ENCODE measurements at regions of chr19 and their contacts with region 1.

Region 1: DNA sequence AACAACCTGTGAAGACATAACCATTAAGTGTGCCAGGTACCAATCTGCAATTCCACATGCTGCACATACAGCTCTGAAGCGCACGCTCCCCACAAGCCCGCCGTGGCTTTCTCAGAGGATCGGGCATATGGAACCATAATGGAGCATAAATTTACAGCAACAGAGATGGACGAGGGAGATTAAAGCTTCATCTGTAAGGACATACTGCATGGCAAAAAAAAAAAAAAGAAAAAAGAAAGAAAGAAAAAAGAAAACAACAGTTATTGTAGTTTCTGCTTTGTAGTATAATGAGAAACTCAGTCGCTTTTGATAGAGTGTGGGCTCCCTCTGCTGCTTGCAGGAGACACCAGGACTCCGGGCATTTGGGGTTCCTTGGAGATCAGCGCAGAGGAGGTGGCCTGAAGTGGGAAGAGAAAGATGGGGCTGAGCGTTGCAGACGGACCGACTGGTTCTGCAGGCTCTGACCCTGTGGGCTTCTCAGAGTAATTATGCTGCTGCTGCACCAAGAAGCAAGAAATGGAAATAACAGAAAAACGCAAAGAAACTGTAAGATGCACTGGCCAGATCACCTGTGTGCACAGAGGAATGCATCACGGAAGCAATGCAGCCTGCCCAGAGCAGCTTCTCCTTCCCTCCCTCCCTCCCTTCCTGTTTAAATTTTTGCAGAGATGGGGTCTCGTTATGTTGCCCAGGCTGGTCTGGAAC is 10.8 kb upstream of the PDCD5 start:
- DNase-seq: peak; percentile 70 to 85
- ATAC-seq: peak; percentile 98
- H3K4me3 ChIP-seq: no peak overlapping the region
- H3K27ac ChIP-seq: no peak overlapping the region
- H3K4me1 ChIP-seq: peaks cover 4% of the 10 kb centered on the region; the same call in 2 of the 3 replicates
- CTCF ChIP-seq: peak; percentile 99
- EP300 ChIP-seq: no peak
- POLR2A ChIP-seq: no peak
- RAD21 ChIP-seq: peak; percentile 99 to 100

Region 2: DNA sequence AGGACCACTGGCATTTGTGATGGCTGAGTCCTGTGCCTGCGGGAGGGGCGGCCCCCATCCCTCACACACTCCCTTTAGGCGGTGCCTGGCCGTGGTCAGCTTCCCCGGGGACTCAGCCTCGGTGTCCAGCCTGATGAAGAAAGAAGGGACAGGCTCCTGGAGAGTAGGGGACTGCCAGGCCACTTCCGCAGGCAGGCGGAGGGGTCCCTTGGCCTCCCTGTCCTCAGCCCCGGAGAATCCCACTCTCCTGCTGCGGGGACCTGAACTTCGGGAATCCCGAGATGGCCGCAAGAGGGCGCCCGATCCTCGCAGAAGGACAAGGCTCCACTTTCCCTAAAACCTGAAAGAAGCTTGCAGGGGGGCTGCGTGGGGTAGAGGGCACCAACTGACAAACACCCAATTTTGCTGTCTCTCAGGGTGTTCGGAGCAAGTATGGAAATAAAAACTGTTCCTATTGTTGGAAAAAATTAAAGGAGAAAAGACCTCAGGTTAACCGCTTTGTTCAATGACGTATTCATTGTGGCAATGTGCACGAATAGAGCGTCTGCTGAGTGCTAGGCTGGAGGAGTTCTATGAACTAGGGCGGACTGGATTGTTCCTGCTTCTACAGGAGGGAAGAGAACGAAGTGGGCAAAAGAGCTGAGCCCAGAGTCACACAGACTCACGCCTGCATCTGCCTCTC is 1900.8 kb before region 1 on chr19:
- CTCF ChIA-PET with region 1: interaction called, 19 read pairs
- POLR2A ChIA-PET with region 1: no interaction called
- DNase-seq: peak; percentile 61 to 66
- ATAC-seq: peak; percentile 61 to 88
- H3K4me3 ChIP-seq: no peak overlapping the region
- H3K27ac ChIP-seq: no peak overlapping the region
- H3K4me1 ChIP-seq: peaks cover 8% of the 10 kb centered on the region; the same call in 1 of the 3 replicates
- CTCF ChIP-seq: peak; percentile 96
- EP300 ChIP-seq: no peak
- POLR2A ChIP-seq: no peak
- RAD21 ChIP-seq: peak; percentile 88

Region 3: GRCh38 chr19:32287811-32288227 is 282.4 kb before region 1 on chr19:
- CTCF ChIA-PET with region 1: interaction called, 77 read pairs
- POLR2A ChIA-PET with region 1: no interaction called
- DNase-seq: peak; percentile 44 to 87
- ATAC-seq: peak; percentile 72 to 96
- H3K4me3 ChIP-seq: no peak overlapping the region
- H3K27ac ChIP-seq: no peak overlapping the region
- H3K4me1 ChIP-seq: peaks cover 3% of the 10 kb centered on the region; the same call in 1 of the 3 replicates
- CTCF ChIP-seq: peak; percentile 76
- EP300 ChIP-seq: no peak
- POLR2A ChIP-seq: no peak
- RAD21 ChIP-seq: peak; percentile 80 to 95

Region 4: DNA sequence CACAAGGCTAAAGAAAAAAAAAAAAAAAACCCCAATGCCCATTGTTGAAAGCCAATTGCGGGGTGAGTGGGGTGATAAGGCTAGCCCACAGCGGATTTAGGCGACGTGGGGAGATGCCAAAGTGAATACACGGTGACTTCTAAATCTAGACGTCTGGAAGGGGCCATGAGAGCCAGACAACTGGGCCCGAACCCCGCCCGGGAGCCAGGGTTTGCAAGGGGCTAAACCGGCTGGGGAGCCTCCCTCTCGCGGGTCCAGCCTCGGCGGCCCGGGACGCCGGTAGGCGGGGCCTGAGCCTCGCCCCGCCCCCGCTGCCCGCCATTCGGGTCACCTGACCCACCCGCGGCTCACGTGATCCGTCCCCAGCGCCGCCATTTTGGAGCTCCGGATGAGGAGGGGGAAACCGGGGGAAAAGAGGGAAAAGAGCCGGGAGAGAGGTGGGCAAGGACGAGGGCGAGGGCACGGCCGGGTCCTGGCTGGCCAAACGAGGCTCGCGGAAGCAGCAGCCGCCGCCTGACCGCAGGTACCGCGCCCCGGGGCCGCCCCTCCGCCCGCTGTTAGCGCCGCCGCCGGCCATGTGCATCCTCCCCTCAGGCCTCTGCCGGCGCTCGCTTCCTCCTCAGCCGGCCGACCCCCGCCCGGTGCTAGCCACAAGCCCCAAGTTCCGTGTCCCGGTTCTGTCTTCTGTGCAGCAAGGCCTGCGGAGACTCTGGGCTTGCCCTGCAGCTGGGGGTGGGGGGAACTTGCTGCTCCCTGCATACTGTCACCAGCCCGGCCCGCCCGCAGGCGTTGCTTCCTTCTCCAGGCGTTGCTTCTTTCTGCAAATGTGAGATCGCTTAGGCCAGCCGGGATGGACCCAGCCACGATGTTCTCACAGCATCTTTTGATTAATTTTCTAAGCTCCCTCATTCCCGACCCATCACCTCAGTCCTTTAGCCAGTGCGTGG is 224.7 kb before region 1 on chr19 and contains the start of gene ZNF507:
- CTCF ChIA-PET with region 1: interaction called, 182 read pairs
- POLR2A ChIA-PET with region 1: interaction called, 3 read pairs
- DNase-seq: peak; percentile 92 to 97
- ATAC-seq: peak; percentile 85 to 92
- H3K4me3 ChIP-seq: peak within 1 kb of the TSS; percentile 72
- H3K27ac ChIP-seq: peak within 1 kb of the TSS; percentile 89
- H3K4me1 ChIP-seq: peaks cover 41% of the 10 kb centered on the region
- CTCF ChIP-seq: no peak
- EP300 ChIP-seq: no peak; a peak in 1 of 5 replicates
- POLR2A ChIP-seq: peak; percentile 87
- RAD21 ChIP-seq: no peak; a peak in 1 of 5 replicates
- polyA plus RNA-seq, gene ZNF507: 49.8 and 50.1 TPM in 2 replicates

Region 5: DNA sequence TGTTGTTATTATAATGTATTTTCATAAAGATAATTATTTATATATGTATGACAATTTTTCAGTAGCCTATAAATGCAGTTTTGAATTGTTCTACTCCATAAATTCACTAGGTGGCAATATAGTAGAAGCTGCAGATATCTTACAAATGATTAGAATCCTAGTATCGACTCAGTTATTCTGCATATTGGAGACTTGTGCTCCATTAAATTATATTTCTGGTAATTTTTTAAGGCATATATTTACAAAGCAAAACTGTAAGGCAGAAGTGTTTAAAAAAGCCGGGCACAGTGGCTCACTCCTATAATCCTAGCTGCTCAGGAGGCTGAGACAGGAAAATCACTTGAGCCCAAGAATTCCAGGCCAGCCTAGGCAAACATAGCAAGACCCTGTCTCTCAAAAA is 106.0 kb before region 1 on chr19:
- CTCF ChIA-PET with region 1: interaction called, 83 read pairs
- POLR2A ChIA-PET with region 1: no interaction called
- DNase-seq: peak in 1 of 2 experiments; percentile 44
- ATAC-seq: peak; percentile 48 to 71; a peak in 4 of 6 replicates
- H3K4me3 ChIP-seq: no peak overlapping the region
- H3K27ac ChIP-seq: no peak overlapping the region
- H3K4me1 ChIP-seq: no peaks in the 10 kb centered on the region
- CTCF ChIP-seq: peak; percentile 83
- EP300 ChIP-seq: no peak
- POLR2A ChIP-seq: no peak
- RAD21 ChIP-seq: peak; percentile 68 to 70

Region 6: GRCh38 chr19:32558607-32559228 is 11.5 kb before region 1 on chr19:
- CTCF ChIA-PET with region 1: interaction called, 70 read pairs
- POLR2A ChIA-PET with region 1: no interaction called
- DNase-seq: no peak
- ATAC-seq: peak; percentile 45 to 61; a peak in 4 of 6 replicates
- H3K4me3 ChIP-seq: no peak overlapping the region
- H3K27ac ChIP-seq: no peak overlapping the region
- H3K4me1 ChIP-seq: no peaks in the 10 kb centered on the region
- CTCF ChIP-seq: no peak
- EP300 ChIP-seq: no peak
- POLR2A ChIP-seq: no peak
- RAD21 ChIP-seq: no peak

Region 7: GRCh38 chr19:32662186-32662585 is 92.0 kb after region 1 on chr19:
- CTCF ChIA-PET with region 1: no interaction called
- POLR2A ChIA-PET with region 1: no interaction called
- DNase-seq: no peak
- ATAC-seq: no peak
- H3K4me3 ChIP-seq: no peak overlapping the region
- H3K27ac ChIP-seq: no peak overlapping the region
- H3K4me1 ChIP-seq: no peaks in the 10 kb centered on the region
- CTCF ChIP-seq: no peak
- EP300 ChIP-seq: no peak
- POLR2A ChIP-seq: no peak
- RAD21 ChIP-seq: no peak

Region 8: GRCh38 chr19:32702075-32702474 is 131.8 kb after region 1 on chr19:
- CTCF ChIA-PET with region 1: no interaction called
- POLR2A ChIA-PET with region 1: no interaction called
- DNase-seq: no peak
- ATAC-seq: no peak
- H3K4me3 ChIP-seq: no peak overlapping the region
- H3K27ac ChIP-seq: no peak overlapping the region
- H3K4me1 ChIP-seq: no peaks in the 10 kb centered on the region
- CTCF ChIP-seq: no peak
- EP300 ChIP-seq: no peak
- POLR2A ChIP-seq: no peak
- RAD21 ChIP-seq: no peak

Measured in A549 (cell line).